ENCODE measurements at regions of chr21 and their contacts with region 1.

Region 1: GRCh38 chr21:45006536-45007135 is 66.8 kb downstream of the SLX9 start:
- DNase-seq: no peak
- H3K4me3 ChIP-seq: no peak overlapping the region
- H3K27ac ChIP-seq: no peak overlapping the region
- H3K4me1 ChIP-seq: peaks cover 16% of the 10 kb centered on the region
- H3K27me3 ChIP-seq: no peaks in the 10 kb centered on the region
- CTCF ChIP-seq: no peak

Region 2: GRCh38 chr21:44497703-44498126 is 508.9 kb before region 1 on chr21:
- CTCF ChIA-PET with region 1: no interaction called
- POLR2A ChIA-PET with region 1: no interaction called
- intact Hi-C with region 1: no loop called
- DNase-seq: no peak
- H3K4me3 ChIP-seq: no peak overlapping the region
- H3K27ac ChIP-seq: no peak overlapping the region
- H3K4me1 ChIP-seq: no peaks in the 10 kb centered on the region
- H3K27me3 ChIP-seq: peaks cover 99% of the 10 kb centered on the region
- CTCF ChIP-seq: no peak

Region 3: DNA sequence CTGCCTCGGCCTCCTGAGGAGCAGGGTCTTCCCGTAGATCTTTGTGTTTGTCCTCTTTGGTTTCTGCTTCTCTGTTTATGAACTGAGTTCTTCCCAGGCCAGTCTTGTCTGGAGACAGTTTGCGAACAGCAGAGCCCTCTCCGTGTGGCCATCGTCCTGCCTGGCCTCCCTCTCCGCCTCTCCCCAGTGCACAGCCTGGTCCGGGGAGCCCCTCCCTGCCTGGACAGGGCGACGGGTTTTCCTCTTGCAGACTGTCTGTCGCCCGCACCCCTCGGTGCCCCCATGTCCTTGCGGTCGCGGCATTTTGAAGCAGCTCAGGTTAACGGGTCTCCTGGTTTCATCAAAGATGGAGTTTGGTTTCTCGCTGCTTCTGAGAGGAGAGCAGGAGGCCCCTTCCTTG is 32.0 kb before region 1 on chr21:
- CTCF ChIA-PET with region 1: interaction called, 21 read pairs
- POLR2A ChIA-PET with region 1: no interaction called
- intact Hi-C with region 1: no loop called
- DNase-seq: no peak
- H3K4me3 ChIP-seq: no peak overlapping the region
- H3K27ac ChIP-seq: no peak overlapping the region
- H3K4me1 ChIP-seq: no peaks in the 10 kb centered on the region
- H3K27me3 ChIP-seq: no peaks in the 10 kb centered on the region
- CTCF ChIP-seq: no peak

Region 4: GRCh38 chr21:44991538-44992483 is 14.8 kb before region 1 on chr21:
- CTCF ChIA-PET with region 1: no interaction called
- POLR2A ChIA-PET with region 1: interaction called, 26 read pairs
- intact Hi-C with region 1: no loop called
- DNase-seq: no peak
- H3K4me3 ChIP-seq: no peak overlapping the region
- H3K27ac ChIP-seq: no peak overlapping the region
- H3K4me1 ChIP-seq: no peaks in the 10 kb centered on the region
- H3K27me3 ChIP-seq: no peaks in the 10 kb centered on the region
- CTCF ChIP-seq: no peak

Region 5: GRCh38 chr21:45055861-45056260 is 49.2 kb after region 1 on chr21:
- CTCF ChIA-PET with region 1: no interaction called
- POLR2A ChIA-PET with region 1: no interaction called
- intact Hi-C with region 1: no loop called
- DNase-seq: no peak
- H3K4me3 ChIP-seq: no peak overlapping the region
- H3K27ac ChIP-seq: no peak overlapping the region
- H3K4me1 ChIP-seq: no peaks in the 10 kb centered on the region
- H3K27me3 ChIP-seq: peaks cover 13% of the 10 kb centered on the region
- CTCF ChIP-seq: no peak